ENCODE measurements at regions of chr13 and their contacts with region 1.

Region 1: GRCh38 chr13:45623515-45624090 is 8.1 kb upstream of the ERICH6B start:
- DNase-seq: peak in 1 of 2 experiments; percentile 32
- H3K4me3 ChIP-seq: no peak overlapping the region
- H3K4me3 Mint-ChIP-seq: no peak overlapping the region
- H3K27ac Mint-ChIP-seq: no peak overlapping the region
- H3K4me1 ChIP-seq: 0 out of 2 replicates have a peak, but pooled peaks cover 4% of the 10 kb centered on the region
- H3K4me1 Mint-ChIP-seq: peaks cover 4% of the 10 kb centered on the region
- H3K27me3 ChIP-seq: no peaks in the 10 kb centered on the region
- H3K27me3 Mint-ChIP-seq: peaks cover 10% of the 10 kb centered on the region
- CTCF ChIP-seq: peak; percentile 35 to 53

Region 2: DNA sequence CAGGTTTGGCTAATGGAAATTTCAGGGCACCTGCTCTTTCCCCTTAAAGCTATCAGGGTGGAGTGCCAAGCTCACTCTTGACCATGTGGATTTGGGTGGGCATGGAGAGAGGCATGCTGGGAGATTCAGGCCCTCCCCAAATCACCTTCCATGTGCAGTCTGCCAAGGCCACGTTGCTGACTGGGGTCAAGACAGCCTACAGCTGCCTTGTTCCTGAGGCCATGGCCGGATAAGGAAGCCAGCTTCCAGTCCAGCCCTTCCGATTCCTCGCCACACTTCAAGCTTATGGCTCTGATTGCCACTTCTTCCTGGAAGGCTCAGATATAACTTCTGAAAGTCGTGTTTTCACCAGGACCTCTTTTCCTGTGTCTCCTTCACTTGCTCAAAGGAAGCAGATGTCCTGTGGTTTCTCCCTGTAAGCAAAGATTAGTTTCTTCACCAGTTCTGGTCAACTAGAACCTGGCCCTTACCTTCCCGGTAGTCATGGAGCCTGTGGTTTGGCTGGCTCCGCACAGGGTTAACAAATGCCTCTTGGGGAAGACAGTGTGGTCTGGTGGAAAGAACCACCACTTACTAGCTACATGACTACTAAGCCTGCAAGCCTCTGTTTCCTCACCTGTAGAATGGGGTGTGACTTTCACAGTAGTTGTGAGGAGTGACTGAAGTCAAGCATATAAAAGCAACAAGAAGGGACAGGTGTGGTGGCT is 266.5 kb before region 1 on chr13:
- CTCF ChIA-PET with region 1: no interaction called
- POLR2A ChIA-PET with region 1: no interaction called
- intact Hi-C with region 1: no loop called
- DNase-seq: no peak
- H3K4me3 ChIP-seq: no peak overlapping the region
- H3K4me3 Mint-ChIP-seq: no peak overlapping the region
- H3K27ac Mint-ChIP-seq: no peak overlapping the region
- H3K4me1 ChIP-seq: peaks cover 3% of the 10 kb centered on the region; the same call in 1 of the 2 replicates
- H3K4me1 Mint-ChIP-seq: peaks cover 5% of the 10 kb centered on the region
- H3K27me3 ChIP-seq: no peaks in the 10 kb centered on the region
- H3K27me3 Mint-ChIP-seq: no peaks in the 10 kb centered on the region
- CTCF ChIP-seq: no peak

Region 3: GRCh38 chr13:45683701-45684100 is 60.1 kb after region 1 on chr13:
- CTCF ChIA-PET with region 1: no interaction called
- POLR2A ChIA-PET with region 1: no interaction called
- intact Hi-C with region 1: loop called (anchors 10 kb)
- DNase-seq: no peak
- H3K4me3 ChIP-seq: no peak overlapping the region
- H3K4me3 Mint-ChIP-seq: no peak overlapping the region
- H3K27ac Mint-ChIP-seq: no peak overlapping the region
- H3K4me1 ChIP-seq: peaks cover 16% of the 10 kb centered on the region
- H3K4me1 Mint-ChIP-seq: peaks cover 6% of the 10 kb centered on the region
- H3K27me3 ChIP-seq: no peaks in the 10 kb centered on the region
- H3K27me3 Mint-ChIP-seq: no peaks in the 10 kb centered on the region
- CTCF ChIP-seq: peak; percentile 17 to 19

Region 4: DNA sequence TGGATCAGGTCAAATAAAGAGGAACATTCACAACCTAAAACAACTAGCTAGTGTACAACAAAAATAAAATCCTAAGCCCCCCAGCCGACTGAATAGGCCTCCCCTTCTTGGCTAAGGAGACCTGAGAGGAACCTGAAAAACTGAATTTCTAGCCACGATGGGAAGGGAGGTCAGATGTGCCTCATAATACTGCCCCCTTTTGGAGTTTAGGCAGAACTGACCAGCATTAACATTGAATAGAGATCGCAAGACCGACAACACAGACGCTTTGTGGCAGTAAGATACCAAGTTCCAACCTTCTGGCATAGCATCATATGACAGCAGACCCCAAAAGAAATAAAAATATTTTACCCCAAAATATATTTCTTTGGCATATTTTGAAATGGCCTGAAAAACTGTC is 94.5 kb after region 1 on chr13:
- CTCF ChIA-PET with region 1: no interaction called
- POLR2A ChIA-PET with region 1: no interaction called
- intact Hi-C with region 1: loop called (anchors 1 kb)
- DNase-seq: peak in 1 of 2 experiments; percentile 16
- H3K4me3 ChIP-seq: no peak overlapping the region
- H3K4me3 Mint-ChIP-seq: no peak overlapping the region
- H3K27ac Mint-ChIP-seq: no peak overlapping the region
- H3K4me1 ChIP-seq: 0 out of 2 replicates have a peak, but pooled peaks cover 5% of the 10 kb centered on the region
- H3K4me1 Mint-ChIP-seq: no peaks in the 10 kb centered on the region
- H3K27me3 ChIP-seq: no peaks in the 10 kb centered on the region
- H3K27me3 Mint-ChIP-seq: no peaks in the 10 kb centered on the region
- CTCF ChIP-seq: peak; percentile 49 to 59

Region 5: DNA sequence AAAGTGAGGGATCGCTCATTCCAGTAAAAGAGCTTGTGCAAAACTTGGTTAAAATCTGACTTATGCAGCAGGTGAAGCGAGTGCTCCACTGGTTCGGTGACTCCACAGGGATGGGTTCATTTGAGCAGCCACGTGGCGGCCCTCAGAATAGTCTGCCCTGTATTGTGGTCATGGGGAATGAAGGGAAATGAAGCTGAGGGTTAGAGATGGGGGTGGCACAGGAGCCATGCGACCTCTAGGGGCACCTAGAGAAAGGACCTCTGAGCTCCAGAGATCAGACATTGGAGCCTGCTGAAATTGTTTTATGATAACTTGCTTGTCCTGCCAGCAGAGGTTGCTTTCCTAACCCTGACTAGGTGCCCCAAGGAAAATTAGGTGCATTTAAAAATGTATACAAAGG is 105.2 kb after region 1 on chr13:
- CTCF ChIA-PET with region 1: interaction called, 8 read pairs
- POLR2A ChIA-PET with region 1: no interaction called
- intact Hi-C with region 1: loop called (anchors 1 kb)
- DNase-seq: peak; percentile 64 to 68
- H3K4me3 ChIP-seq: no peak overlapping the region
- H3K4me3 Mint-ChIP-seq: no peak overlapping the region
- H3K27ac Mint-ChIP-seq: no peak overlapping the region
- H3K4me1 ChIP-seq: no peaks in the 10 kb centered on the region
- H3K4me1 Mint-ChIP-seq: no peaks in the 10 kb centered on the region
- H3K27me3 ChIP-seq: no peaks in the 10 kb centered on the region
- H3K27me3 Mint-ChIP-seq: no peaks in the 10 kb centered on the region
- CTCF ChIP-seq: peak; percentile 74 to 78

Region 6: GRCh38 chr13:45925151-45925550 is 301.5 kb after region 1 on chr13:
- CTCF ChIA-PET with region 1: no interaction called
- POLR2A ChIA-PET with region 1: no interaction called
- intact Hi-C with region 1: no loop called
- DNase-seq: no peak
- H3K4me3 ChIP-seq: no peak overlapping the region
- H3K4me3 Mint-ChIP-seq: no peak overlapping the region
- H3K27ac Mint-ChIP-seq: no peak overlapping the region
- H3K4me1 ChIP-seq: no peaks in the 10 kb centered on the region
- H3K4me1 Mint-ChIP-seq: no peaks in the 10 kb centered on the region
- H3K27me3 ChIP-seq: no peaks in the 10 kb centered on the region
- H3K27me3 Mint-ChIP-seq: no peaks in the 10 kb centered on the region
- CTCF ChIP-seq: no peak

Region 7: DNA sequence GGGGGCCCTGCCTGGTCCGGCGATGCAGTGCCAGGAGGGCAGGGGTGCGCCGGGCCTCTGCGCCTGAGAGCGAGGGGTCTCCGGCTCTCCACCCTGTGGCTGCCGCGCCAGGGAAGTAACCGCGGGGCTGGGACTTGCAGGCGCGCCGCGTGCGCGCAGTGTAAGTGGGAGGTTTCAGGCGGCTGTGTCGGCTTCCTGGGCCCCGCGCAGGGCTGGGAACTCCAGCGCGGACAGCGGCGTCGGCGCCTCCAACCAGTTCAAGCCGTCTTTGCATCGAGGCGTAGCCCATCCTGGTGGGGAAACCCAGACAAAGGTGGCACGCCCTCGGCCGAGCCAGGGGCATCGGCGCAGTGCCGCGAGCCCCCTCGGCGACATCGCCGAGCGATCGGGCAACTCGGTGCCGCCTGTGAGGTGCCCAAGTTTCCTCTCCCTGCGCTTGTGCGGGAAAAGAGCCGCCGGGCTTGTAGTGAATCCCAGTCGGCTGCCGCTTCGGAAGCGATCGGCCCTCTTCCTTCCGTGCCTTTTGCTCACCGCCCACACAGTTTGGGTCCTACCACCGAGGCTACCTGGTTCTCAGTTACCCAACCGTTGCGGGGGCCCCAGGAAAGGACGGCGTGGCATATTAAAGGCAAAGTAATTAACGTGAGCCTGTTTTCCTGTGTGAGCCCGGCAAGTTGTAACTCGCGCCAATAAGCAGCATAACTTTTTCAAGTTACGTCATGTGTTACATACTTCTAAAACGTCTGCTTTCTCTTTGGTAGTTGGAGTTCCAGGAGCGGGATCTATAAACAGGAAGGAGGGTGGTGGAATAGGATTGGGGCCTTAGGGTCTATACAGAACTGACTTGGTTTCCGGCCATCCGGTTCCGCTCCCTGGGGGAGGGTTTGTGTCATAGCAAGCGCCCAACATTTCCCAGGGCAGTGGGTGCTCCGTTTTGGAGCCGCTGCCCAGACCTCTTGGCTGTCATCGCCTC is 930.6 kb after region 1 on chr13:
- CTCF ChIA-PET with region 1: no interaction called
- POLR2A ChIA-PET with region 1: no interaction called
- intact Hi-C with region 1: no loop called
- DNase-seq: peak; percentile 79 to 80
- H3K4me3 ChIP-seq: peak overlapping the region; percentile 99
- H3K4me3 Mint-ChIP-seq: peak overlapping the region; percentile 97
- H3K27ac Mint-ChIP-seq: peak overlapping the region; percentile 87
- H3K4me1 ChIP-seq: peaks cover 23% of the 10 kb centered on the region
- H3K4me1 Mint-ChIP-seq: peaks cover 33% of the 10 kb centered on the region
- H3K27me3 ChIP-seq: no peaks in the 10 kb centered on the region
- H3K27me3 Mint-ChIP-seq: no peaks in the 10 kb centered on the region
- CTCF ChIP-seq: peak; percentile 34 to 55

Measured in Caco-2 (cell line).